Posterior vena cava (tissue), 2 donors: ENCODE measurements at regions of chr20 and their contacts with region 1.

Region 1: GRCh38 chr20:11520596-11520995 is 397.1 kb upstream of the BTBD3 start:
- DNase-seq: no peak

Region 2: DNA sequence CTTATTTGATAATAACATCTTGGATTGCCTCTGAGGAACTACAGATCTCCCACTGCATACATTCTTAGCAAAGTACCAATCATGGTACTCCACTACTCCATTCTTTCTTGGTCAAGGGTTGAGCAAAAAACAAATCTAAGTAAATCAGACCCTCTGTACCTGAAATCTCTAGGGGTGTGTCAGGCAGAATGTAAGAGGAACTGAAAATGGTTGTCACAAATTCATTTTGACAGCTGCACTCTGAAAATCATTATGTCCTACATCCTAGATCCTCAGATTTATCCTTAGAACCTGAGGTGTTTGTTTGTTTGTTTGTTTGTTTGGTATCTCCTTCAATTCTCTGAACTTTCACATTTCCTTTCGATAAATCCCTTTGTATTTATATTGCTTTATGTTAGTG is 36.1 kb before region 1 on chr20:
- intact Hi-C with region 1: loop called in 1 of 2 experiments (anchors 1 kb)
- DNase-seq: no peak

Region 3: DNA sequence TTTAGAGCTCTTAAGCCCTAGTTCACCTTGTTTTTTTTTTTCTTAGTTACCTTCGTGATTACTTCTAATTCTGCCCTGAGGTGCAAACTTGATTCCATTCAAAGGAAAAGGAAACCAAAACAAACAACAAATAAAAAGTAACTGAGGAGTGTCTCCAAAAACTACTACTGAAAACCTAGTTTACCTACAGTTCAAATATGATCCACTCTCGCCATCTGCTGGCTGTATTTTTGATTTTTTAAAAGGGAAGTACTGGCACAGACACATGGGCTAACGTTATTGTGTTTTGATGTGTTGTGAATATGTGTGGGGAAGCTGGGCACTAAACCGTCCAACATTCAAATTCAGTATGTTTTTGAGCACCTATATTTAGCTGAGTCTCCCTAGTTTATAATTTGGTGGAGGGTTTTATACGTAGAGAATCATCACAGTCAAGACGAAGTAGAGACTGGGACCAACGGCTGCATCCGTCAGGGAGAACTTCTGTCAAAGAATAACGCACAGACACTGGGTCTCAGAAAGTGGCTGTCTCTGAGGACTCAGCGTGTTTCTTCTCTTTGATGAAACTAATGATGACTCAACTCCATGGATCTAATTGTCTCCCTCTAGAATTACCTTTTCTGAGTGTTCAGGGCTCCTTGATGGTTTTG is 23.6 kb after region 1 on chr20:
- intact Hi-C with region 1: no loop called
- DNase-seq: no peak